ENCODE measurements at regions of chr21 and their contacts with region 1.

Region 1: GRCh38 chr21:28516991-28517592 is 475.6 kb downstream of the LTN1 start:
- DNase-seq: peak; percentile 78 to 80
- H3K4me3 ChIP-seq: no peak overlapping the region
- H3K4me3 Mint-ChIP-seq: no peak overlapping the region
- H3K27ac Mint-ChIP-seq: no peak overlapping the region
- H3K4me1 ChIP-seq: no peaks in the 10 kb centered on the region
- H3K4me1 Mint-ChIP-seq: no peaks in the 10 kb centered on the region
- H3K27me3 ChIP-seq: no peaks in the 10 kb centered on the region
- H3K27me3 Mint-ChIP-seq: no peaks in the 10 kb centered on the region
- CTCF ChIP-seq: peak; percentile 48 to 91

Region 2: GRCh38 chr21:28590676-28591075 is 73.6 kb after region 1 on chr21:
- CTCF ChIA-PET with region 1: no interaction called
- POLR2A ChIA-PET with region 1: no interaction called
- intact Hi-C with region 1: loop called (anchors 2 kb)
- DNase-seq: no peak
- H3K4me3 ChIP-seq: no peak overlapping the region
- H3K4me3 Mint-ChIP-seq: no peak overlapping the region
- H3K27ac Mint-ChIP-seq: no peak overlapping the region
- H3K4me1 ChIP-seq: peaks cover 9% of the 10 kb centered on the region; the same call in 1 of the 2 replicates
- H3K4me1 Mint-ChIP-seq: no peaks in the 10 kb centered on the region
- H3K27me3 ChIP-seq: no peaks in the 10 kb centered on the region
- H3K27me3 Mint-ChIP-seq: no peaks in the 10 kb centered on the region
- CTCF ChIP-seq: no peak

Region 3: DNA sequence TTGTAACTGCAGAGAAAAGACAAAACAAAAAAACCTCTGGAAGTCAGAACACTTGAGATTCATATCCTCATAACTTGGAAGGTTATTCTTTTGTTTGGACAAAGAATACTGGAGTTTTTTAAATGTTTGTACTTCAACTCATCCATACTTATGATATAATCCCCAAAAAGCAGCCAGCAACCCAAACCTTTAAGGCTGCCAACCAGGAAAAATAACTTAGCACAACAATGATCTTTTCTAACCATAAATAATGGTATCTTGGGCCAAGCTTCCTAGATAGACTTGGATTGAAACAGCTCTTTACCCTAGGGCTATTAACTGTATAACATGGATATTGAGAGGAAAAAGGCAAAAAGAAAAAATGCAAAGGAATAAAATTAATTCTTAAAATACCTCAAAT is 140.5 kb after region 1 on chr21:
- CTCF ChIA-PET with region 1: no interaction called
- POLR2A ChIA-PET with region 1: no interaction called
- intact Hi-C with region 1: loop called (anchors 10 kb)
- DNase-seq: no peak
- H3K4me3 ChIP-seq: no peak overlapping the region
- H3K4me3 Mint-ChIP-seq: no peak overlapping the region
- H3K27ac Mint-ChIP-seq: no peak overlapping the region
- H3K4me1 ChIP-seq: peaks cover 13% of the 10 kb centered on the region
- H3K4me1 Mint-ChIP-seq: peaks cover 7% of the 10 kb centered on the region
- H3K27me3 ChIP-seq: no peaks in the 10 kb centered on the region
- H3K27me3 Mint-ChIP-seq: no peaks in the 10 kb centered on the region
- CTCF ChIP-seq: no peak